ENCODE measurements at regions of chr12 and their contacts with region 1.

Region 1: GRCh38 chr12:55738123-55739024 is 4.5 kb upstream of the GDF11 start:
- DNase-seq: peak; percentile 86
- H3K4me3 Mint-ChIP-seq: peak overlapping the region; percentile 68
- H3K27ac Mint-ChIP-seq: peak overlapping the region; percentile 42
- H3K4me1 Mint-ChIP-seq: peaks cover 35% of the 10 kb centered on the region
- H3K27me3 Mint-ChIP-seq: peaks cover 21% of the 10 kb centered on the region
- CTCF ChIP-seq: peak; percentile 55

Region 2: DNA sequence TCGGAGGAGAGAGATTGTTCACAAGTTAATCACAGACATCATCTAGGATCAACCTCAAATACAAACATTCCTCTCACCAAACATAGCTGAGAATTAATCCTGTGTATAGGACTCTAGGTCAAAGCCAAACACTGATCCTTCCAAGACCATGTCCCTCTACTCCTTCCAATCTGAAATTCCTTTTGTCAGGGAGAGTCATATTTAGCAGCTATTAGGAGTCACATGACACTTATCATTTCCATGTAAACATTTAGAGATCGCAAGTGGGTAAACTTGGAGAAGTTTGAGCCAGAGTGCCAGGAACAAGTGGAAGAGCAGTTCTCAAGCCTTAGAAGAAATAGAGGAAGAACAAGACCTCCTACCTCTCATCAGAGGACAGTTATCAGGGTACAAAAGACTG is 152.6 kb before region 1 on chr12:
- CTCF ChIA-PET with region 1: no interaction called
- intact Hi-C with region 1: no loop called
- DNase-seq: no peak
- H3K4me3 Mint-ChIP-seq: no peak overlapping the region
- H3K27ac Mint-ChIP-seq: no peak overlapping the region
- H3K4me1 Mint-ChIP-seq: no peaks in the 10 kb centered on the region
- H3K27me3 Mint-ChIP-seq: peaks cover 27% of the 10 kb centered on the region
- CTCF ChIP-seq: no peak

Region 3: GRCh38 chr12:55681142-55682077 is 57.0 kb before region 1 on chr12:
- CTCF ChIA-PET with region 1: interaction called, 41 read pairs
- intact Hi-C with region 1: loop called (anchors 5 kb)
- DNase-seq: peak; percentile 87
- H3K4me3 Mint-ChIP-seq: peak overlapping the region; percentile 87
- H3K27ac Mint-ChIP-seq: peak overlapping the region; percentile 68
- H3K4me1 Mint-ChIP-seq: peaks cover 30% of the 10 kb centered on the region
- H3K27me3 Mint-ChIP-seq: no peaks in the 10 kb centered on the region
- CTCF ChIP-seq: peak; percentile 55

Region 4: DNA sequence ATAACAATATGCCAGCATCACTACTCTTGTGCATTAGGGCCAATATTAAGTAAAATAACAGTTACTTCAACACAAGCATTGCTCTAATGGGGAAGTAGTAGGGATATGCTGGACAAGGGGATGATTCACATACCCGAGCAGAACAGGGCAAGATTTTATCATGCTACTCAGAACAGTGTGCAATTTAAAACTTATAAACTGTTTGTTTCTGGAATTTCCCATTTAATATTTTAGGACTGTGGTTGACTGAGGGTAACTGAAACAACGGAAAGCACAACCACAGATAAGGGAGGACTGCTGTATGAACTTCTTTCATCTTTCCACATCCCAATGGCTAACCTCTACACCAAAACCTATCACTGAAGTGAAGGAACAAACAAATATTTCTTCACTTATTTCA is 42.3 kb after region 1 on chr12:
- CTCF ChIA-PET with region 1: no interaction called
- intact Hi-C with region 1: loop called (anchors 1 kb)
- DNase-seq: no peak
- H3K4me3 Mint-ChIP-seq: no peak overlapping the region
- H3K27ac Mint-ChIP-seq: no peak overlapping the region
- H3K4me1 Mint-ChIP-seq: no peaks in the 10 kb centered on the region
- H3K27me3 Mint-ChIP-seq: no peaks in the 10 kb centered on the region
- CTCF ChIP-seq: no peak

Region 5: DNA sequence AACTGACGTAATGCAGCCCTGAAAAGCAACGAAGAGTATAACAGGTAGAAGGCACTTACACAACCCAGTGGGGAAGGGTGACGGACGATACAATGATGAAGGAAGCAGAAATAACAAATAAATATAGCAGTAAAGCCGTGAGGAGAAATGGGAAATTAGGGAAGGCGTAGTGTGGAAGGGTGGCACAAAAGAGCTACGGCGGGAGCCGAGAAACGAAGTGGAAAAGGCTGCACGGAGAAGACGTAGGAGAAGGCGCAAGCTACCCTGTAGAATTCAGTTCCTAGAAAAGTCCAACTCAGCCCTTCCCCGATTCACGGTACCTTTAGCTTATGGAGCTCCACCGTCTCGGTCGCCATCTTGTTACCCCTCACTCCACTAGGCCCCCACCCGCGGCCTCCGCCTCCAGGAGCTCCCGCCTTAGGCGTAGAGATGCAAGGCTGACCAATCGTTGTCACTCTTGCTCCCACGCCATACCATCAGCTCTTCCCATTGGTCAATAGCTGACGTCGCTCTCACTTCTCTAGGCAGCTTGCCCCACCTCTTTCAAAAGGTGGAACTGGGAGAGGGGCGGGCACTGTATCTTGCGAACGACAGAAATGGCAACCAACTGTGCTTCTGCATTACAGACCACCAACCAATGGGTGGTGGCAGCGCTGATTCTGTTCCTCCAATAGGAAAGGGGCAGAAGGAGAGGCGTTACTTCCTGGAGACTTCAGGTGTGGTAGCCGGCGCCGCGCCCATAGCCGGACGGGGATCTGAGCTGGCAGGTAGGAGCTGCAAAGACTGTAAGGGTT is 79.2 kb after region 1 on chr12 and contains the starts of genes ORMDL2 and SARNP:
- CTCF ChIA-PET with region 1: interaction called, 14 read pairs
- intact Hi-C with region 1: loop called (anchors 5 kb)
- DNase-seq: peak; percentile 97
- H3K4me3 Mint-ChIP-seq: no peak within 1 kb of the TSS
- H3K27ac Mint-ChIP-seq: no peak within 1 kb of the TSS
- H3K4me1 Mint-ChIP-seq: peaks cover 35% of the 10 kb centered on the region
- H3K27me3 Mint-ChIP-seq: no peaks in the 10 kb centered on the region
- CTCF ChIP-seq: no peak
- total RNA-seq, gene ORMDL2: 93.6 and 95.4 TPM in 2 replicates
- total RNA-seq, gene SARNP: 64.4 and 73.8 TPM in 2 replicates

Region 6: GRCh38 chr12:55940065-55940732 is 201.8 kb after region 1 on chr12:
- CTCF ChIA-PET with region 1: interaction called, 23 read pairs
- intact Hi-C with region 1: loop called (anchors 1 kb)
- DNase-seq: peak; percentile 93
- H3K4me3 Mint-ChIP-seq: no peak overlapping the region
- H3K27ac Mint-ChIP-seq: no peak overlapping the region
- H3K4me1 Mint-ChIP-seq: peaks cover 22% of the 10 kb centered on the region
- H3K27me3 Mint-ChIP-seq: no peaks in the 10 kb centered on the region
- CTCF ChIP-seq: peak; percentile 80

Region 7: GRCh38 chr12:56041552-56042429 is 303.4 kb after region 1 on chr12 and contains the start of gene RPS26:
- CTCF ChIA-PET with region 1: interaction called, 3 read pairs
- intact Hi-C with region 1: loop called (anchors 2 kb)
- DNase-seq: peak; percentile 93
- H3K4me3 Mint-ChIP-seq: peak within 1 kb of the TSS; percentile 90
- H3K27ac Mint-ChIP-seq: peak within 1 kb of the TSS; percentile 95
- H3K4me1 Mint-ChIP-seq: peaks cover 18% of the 10 kb centered on the region
- H3K27me3 Mint-ChIP-seq: no peaks in the 10 kb centered on the region
- CTCF ChIP-seq: peak; percentile 51
- total RNA-seq, gene RPS26: 50.6 and 50.7 TPM in 2 replicates

Measured in Calu3 (cell line).